Naive thymus-derived CD4-positive, alpha-beta T cell (primary cell): ENCODE measurements at regions of chr5 and their contacts with region 1.

Region 1: GRCh38 chr5:10761166-10761932 is at the start of gene DAP:
- DNase-seq: peak; percentile 86 to 97 (median 92)
- ATAC-seq: peak; percentile 93
- H3K4me3 ChIP-seq: peak within 1 kb of the TSS; percentile 73
- H3K4me3 Mint-ChIP-seq: peak within 1 kb of the TSS; percentile 89 to 96 (median 92)
- H3K27ac ChIP-seq: peak within 1 kb of the TSS; percentile 83
- H3K27ac Mint-ChIP-seq: peak within 1 kb of the TSS; percentile 82 to 97 (median 89)
- H3K4me1 ChIP-seq: peaks cover 15 to 16% of the 10 kb centered on the region in 2 donors
- H3K4me1 Mint-ChIP-seq: peaks cover 14 to 60% (median 54%) of the 10 kb centered on the region in 7 donors
- H3K27me3 ChIP-seq: no peaks in the 10 kb centered on the region
- H3K27me3 Mint-ChIP-seq: peaks cover 0 to 14% (median 0%) of the 10 kb centered on the region in 5 donors
- total RNA-seq, gene DAP: 31.9 to 58.6 (median 38.5) TPM

Region 2: DNA sequence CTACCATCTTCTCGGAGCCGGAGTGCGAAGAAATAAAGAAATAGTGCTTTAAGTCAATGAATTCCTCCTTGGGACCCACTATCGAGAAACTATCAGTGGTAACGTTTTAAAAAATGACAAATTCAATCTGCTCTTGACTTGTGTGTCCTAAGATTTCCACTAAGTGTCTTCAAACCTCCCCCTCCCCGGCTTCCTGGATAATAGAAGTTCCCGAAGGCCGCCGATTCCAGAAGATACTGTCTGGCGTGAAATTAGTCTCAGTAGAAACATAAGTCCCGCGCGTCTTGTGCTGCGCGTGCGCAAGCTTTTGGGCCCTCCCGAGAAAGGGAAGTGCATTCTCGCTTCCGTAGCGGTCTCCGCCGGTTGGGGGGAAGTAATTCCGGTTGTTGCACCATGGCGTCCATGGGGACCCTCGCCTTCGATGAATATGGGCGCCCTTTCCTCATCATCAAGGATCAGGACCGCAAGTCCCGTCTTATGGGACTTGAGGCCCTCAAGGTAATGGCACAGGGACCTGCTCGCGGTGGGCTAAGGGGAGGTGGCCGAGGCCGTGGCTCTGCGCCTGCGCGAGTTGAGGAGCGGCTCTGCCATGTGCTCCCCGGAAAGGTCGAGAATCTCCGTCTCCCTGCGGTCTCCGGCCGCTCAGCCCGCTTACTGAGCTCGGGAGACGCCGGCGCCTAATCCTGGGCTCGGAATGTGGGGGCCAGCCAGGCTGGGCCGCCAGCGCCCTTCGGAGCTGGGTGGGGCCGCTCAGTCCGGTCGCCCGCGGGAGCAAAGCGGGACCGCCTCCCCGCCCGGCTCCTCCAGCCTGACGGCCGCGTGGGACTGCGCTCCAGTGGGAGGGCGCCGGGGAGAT is 511.2 kb before region 1 on chr5 and contains the start of gene CCT5:
- CTCF ChIA-PET with region 1: no interaction called
- POLR2A ChIA-PET with region 1: no interaction called
- intact Hi-C with region 1: loop called (anchors 1 kb)
- DNase-seq: peak; percentile 83 to 97 (median 95)
- ATAC-seq: peak; percentile 91
- H3K4me3 ChIP-seq: peak within 1 kb of the TSS; percentile 97
- H3K4me3 Mint-ChIP-seq: peak within 1 kb of the TSS; percentile 83 to 99 (median 95)
- H3K27ac ChIP-seq: peak within 1 kb of the TSS; percentile 89
- H3K27ac Mint-ChIP-seq: peak within 1 kb of the TSS; percentile 96 to 100 (median 99)
- H3K4me1 ChIP-seq: peaks cover 12 to 32% of the 10 kb centered on the region in 2 donors
- H3K4me1 Mint-ChIP-seq: peaks cover 47 to 66% (median 53%) of the 10 kb centered on the region in 7 donors
- H3K27me3 ChIP-seq: no peaks in the 10 kb centered on the region
- H3K27me3 Mint-ChIP-seq: peaks cover 0 to 5% (median 0%) of the 10 kb centered on the region in 5 donors
- total RNA-seq, gene CCT5: 58.0 to 265 (median 81.9) TPM

Region 3: DNA sequence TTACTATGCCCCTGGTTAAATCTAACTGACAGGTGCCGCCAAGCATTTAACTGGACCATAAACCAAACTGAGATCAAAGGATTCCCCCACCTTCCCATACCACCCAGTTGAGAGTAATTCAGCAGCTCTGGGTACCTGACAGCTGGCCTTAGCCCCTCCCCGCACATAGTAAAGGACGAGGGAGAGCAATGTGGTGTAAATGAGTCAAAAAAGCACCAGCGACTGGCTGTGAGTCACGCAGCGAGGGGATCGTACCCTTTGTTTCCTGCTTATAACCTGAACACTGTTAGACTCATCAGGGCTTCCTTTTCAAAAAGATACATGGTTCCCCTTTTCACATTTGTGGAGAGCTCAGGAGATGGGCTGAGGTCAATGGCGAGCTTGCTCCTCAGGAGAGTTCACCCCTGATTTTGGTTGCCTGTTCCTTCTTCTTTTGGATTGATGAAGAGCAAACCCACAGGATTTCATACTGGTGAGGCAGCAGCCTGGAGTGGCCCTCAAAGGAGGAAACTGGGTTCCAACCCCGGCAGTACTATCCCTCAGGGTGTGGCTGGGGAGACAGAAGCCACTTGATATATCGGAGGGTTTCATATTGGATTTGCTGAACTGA is 126.0 kb before region 1 on chr5:
- CTCF ChIA-PET with region 1: no interaction called
- POLR2A ChIA-PET with region 1: no interaction called
- intact Hi-C with region 1: loop called (anchors 2 kb)
- DNase-seq: peak in 1 of 9 donors; percentile 70
- ATAC-seq: peak; percentile 76
- H3K4me3 ChIP-seq: no peak overlapping the region
- H3K4me3 Mint-ChIP-seq: peak overlapping the region in 6 of 10 donors; percentile 19 to 70 (median 39)
- H3K27ac ChIP-seq: no peak overlapping the region
- H3K27ac Mint-ChIP-seq: peak overlapping the region in 4 of 9 donors; percentile 51 to 91 (median 68)
- H3K4me1 ChIP-seq: peaks cover 6 to 26% of the 10 kb centered on the region in 2 donors
- H3K4me1 Mint-ChIP-seq: peaks cover 12 to 61% (median 30%) of the 10 kb centered on the region in 7 donors
- H3K27me3 ChIP-seq: no peaks in the 10 kb centered on the region
- H3K27me3 Mint-ChIP-seq: no peaks in the 10 kb centered on the region

Region 4: DNA sequence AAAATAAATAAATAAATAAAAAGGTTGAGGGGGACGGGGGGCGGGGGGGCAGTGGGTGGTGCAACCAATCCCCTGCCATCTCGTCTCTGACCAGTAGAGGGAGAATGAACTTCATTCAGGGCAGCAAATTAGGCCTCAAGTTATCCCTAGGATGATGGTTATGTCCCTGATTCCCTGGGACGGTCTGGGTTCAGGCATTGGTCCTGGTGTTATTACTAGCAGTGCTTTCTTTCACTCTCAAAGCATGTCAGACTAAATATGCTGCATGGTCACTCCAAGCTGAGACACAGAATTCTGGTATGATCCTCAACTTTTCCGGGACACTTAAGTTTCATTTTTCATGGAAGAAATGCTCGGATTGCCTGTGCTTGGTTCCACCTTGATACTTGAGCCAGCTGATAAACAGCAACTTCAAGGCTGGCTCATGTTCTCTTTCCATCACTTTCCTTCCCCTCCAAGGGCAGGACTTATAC is 59.7 kb before region 1 on chr5:
- CTCF ChIA-PET with region 1: no interaction called
- POLR2A ChIA-PET with region 1: interaction called, 3 read pairs
- intact Hi-C with region 1: loop called in 1 of 2 experiments (anchors 5 kb)
- DNase-seq: peak in 5 of 9 donors; percentile 11 to 27 (median 19)
- ATAC-seq: peak; percentile 50
- H3K4me3 ChIP-seq: no peak overlapping the region
- H3K4me3 Mint-ChIP-seq: no peak overlapping the region
- H3K27ac ChIP-seq: no peak overlapping the region
- H3K27ac Mint-ChIP-seq: peak overlapping the region in 1 of 9 donors; percentile 42
- H3K4me1 ChIP-seq: peaks cover 7 to 14% of the 10 kb centered on the region in 2 donors
- H3K4me1 Mint-ChIP-seq: peaks cover 39 to 58% (median 53%) of the 10 kb centered on the region in 7 donors
- H3K27me3 ChIP-seq: no peaks in the 10 kb centered on the region
- H3K27me3 Mint-ChIP-seq: no peaks in the 10 kb centered on the region